B cell (primary cell): ENCODE measurements at regions of chr19 and their contacts with region 1.

Region 1: GRCh38 chr19:36772311-36773222 is at the start of gene ZNF850:
- DNase-seq: peak; percentile 98
- ATAC-seq: peak; percentile 92
- H3K4me3 ChIP-seq: peak within 1 kb of the TSS; percentile 66 to 99 (median 96)
- H3K4me3 Mint-ChIP-seq: peak within 1 kb of the TSS; percentile 98
- H3K27ac ChIP-seq: peak within 1 kb of the TSS; percentile 69 to 81
- H3K27ac Mint-ChIP-seq: peak within 1 kb of the TSS; percentile 94
- H3K4me1 ChIP-seq: peaks cover 15 to 21% of the 10 kb centered on the region in 2 donors
- H3K4me1 Mint-ChIP-seq: peaks cover 25% of the 10 kb centered on the region
- H3K27me3 ChIP-seq: no peaks in the 10 kb centered on the region
- H3K27me3 Mint-ChIP-seq: no peaks in the 10 kb centered on the region
- CTCF ChIP-seq: no peak
- total RNA-seq, gene ZNF850: 6.0 and 6.7 TPM in 2 replicates

Region 2: DNA sequence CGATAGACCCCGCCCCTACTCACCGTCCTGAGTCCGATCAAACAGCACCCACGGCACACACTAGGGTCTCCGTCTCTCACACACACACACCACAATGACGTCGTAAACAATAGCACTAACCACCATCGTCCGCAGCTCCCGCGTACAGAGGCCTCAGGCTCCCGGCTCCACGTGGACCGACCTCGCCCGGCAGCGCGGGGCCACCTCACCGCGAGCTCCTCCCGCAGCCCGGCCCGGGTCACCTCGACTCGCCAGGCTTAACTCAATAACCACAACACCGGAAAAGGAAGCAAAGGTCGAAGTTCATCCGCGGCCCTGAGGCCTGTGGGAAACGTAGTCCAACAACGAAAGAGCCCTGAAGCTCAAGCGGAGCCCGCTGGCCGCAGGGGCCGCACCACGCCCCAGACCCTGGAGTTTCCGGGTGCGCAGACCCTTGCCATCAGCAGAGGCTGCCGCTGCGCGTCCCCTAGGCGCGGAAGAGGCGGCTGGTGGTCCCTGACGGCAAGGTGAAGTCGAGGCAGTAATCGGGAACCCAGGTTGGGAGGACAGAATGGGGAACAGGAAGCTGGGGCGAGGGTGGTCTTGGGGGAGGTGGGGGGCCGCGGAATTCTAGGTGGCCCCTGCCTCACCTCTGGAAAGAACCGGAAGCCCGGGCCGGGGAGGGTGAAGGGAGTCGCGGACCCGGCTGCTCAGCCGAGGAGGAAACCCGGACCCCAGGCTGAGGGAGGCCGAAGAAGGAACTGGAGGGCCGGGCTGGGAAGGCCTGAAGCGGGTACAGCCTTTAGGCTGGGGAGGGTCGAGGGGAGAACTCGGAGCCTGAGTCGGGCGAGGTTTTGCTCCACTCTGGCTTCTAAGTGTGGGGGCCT is 199.3 kb before region 1 on chr19 and contains the start of gene ZNF529:
- CTCF ChIA-PET with region 1: no interaction called
- POLR2A ChIA-PET with region 1: no interaction called
- intact Hi-C with region 1: loop called (anchors 1 kb)
- DNase-seq: peak; percentile 93
- ATAC-seq: peak; percentile 94
- H3K4me3 ChIP-seq: peak within 1 kb of the TSS; percentile 57 to 91 (median 88)
- H3K4me3 Mint-ChIP-seq: peak within 1 kb of the TSS; percentile 92
- H3K27ac ChIP-seq: peak within 1 kb of the TSS; percentile 82 to 98
- H3K27ac Mint-ChIP-seq: peak within 1 kb of the TSS; percentile 91
- H3K4me1 ChIP-seq: peaks cover 18% of the 10 kb centered on the region in 2 donors
- H3K4me1 Mint-ChIP-seq: peaks cover 34% of the 10 kb centered on the region
- H3K27me3 ChIP-seq: no peaks in the 10 kb centered on the region
- H3K27me3 Mint-ChIP-seq: no peaks in the 10 kb centered on the region
- CTCF ChIP-seq: no peak
- total RNA-seq, gene ZNF529: 33.2 and 35.4 TPM in 2 replicates

Region 3: GRCh38 chr19:36745870-36746269 is 26.7 kb before region 1 on chr19:
- CTCF ChIA-PET with region 1: no interaction called
- POLR2A ChIA-PET with region 1: no interaction called
- intact Hi-C with region 1: no loop called
- DNase-seq: no peak
- ATAC-seq: no peak
- H3K4me3 ChIP-seq: no peak overlapping the region
- H3K4me3 Mint-ChIP-seq: no peak overlapping the region
- H3K27ac ChIP-seq: no peak overlapping the region
- H3K27ac Mint-ChIP-seq: no peak overlapping the region
- H3K4me1 ChIP-seq: no peaks in the 10 kb centered on the region
- H3K4me1 Mint-ChIP-seq: no peaks in the 10 kb centered on the region
- H3K27me3 ChIP-seq: no peaks in the 10 kb centered on the region
- H3K27me3 Mint-ChIP-seq: no peaks in the 10 kb centered on the region
- CTCF ChIP-seq: no peak

Region 4: GRCh38 chr19:36796076-36796992 is 23.8 kb after region 1 on chr19:
- CTCF ChIA-PET with region 1: no interaction called
- POLR2A ChIA-PET with region 1: interaction called, 3 read pairs
- intact Hi-C with region 1: loop called (anchors 1 kb)
- DNase-seq: no peak
- ATAC-seq: no peak
- H3K4me3 ChIP-seq: peak overlapping the region; percentile 63 to 91 (median 84)
- H3K4me3 Mint-ChIP-seq: peak overlapping the region; percentile 95
- H3K27ac ChIP-seq: peak overlapping the region; percentile 86 to 90
- H3K27ac Mint-ChIP-seq: peak overlapping the region; percentile 99
- H3K4me1 ChIP-seq: peaks cover 0 to 17% of the 10 kb centered on the region in 2 donors
- H3K4me1 Mint-ChIP-seq: peaks cover 25% of the 10 kb centered on the region
- H3K27me3 ChIP-seq: peaks cover 0 to 6% (median 0%) of the 10 kb centered on the region in 4 experiments
- H3K27me3 Mint-ChIP-seq: peaks cover 7% of the 10 kb centered on the region
- CTCF ChIP-seq: no peak

Region 5: DNA sequence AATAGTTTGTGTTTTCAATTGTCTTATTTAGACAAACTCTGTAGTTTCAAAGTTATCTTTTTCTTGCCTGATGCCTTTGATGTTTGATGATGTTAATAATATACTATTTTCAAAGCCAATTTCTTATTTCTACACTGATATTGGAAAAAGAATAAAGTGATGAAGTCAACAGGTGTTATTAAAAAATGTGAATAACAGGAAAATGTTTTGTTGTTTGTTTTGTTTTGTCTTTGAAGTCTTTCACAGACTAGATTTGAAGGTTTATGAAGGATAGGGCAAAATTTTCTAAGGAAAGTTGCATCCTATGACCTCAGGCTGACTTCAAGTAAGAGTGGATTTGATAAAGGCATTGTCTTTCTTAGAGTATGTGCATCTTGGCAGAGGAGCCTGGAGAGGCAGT is 34.5 kb after region 1 on chr19:
- CTCF ChIA-PET with region 1: no interaction called
- POLR2A ChIA-PET with region 1: no interaction called
- intact Hi-C with region 1: no loop called
- DNase-seq: no peak
- ATAC-seq: no peak
- H3K4me3 ChIP-seq: no peak overlapping the region
- H3K4me3 Mint-ChIP-seq: no peak overlapping the region
- H3K27ac ChIP-seq: no peak overlapping the region
- H3K27ac Mint-ChIP-seq: no peak overlapping the region
- H3K4me1 ChIP-seq: no peaks in the 10 kb centered on the region
- H3K4me1 Mint-ChIP-seq: no peaks in the 10 kb centered on the region
- H3K27me3 ChIP-seq: no peaks in the 10 kb centered on the region
- H3K27me3 Mint-ChIP-seq: no peaks in the 10 kb centered on the region
- CTCF ChIP-seq: no peak

Region 6: DNA sequence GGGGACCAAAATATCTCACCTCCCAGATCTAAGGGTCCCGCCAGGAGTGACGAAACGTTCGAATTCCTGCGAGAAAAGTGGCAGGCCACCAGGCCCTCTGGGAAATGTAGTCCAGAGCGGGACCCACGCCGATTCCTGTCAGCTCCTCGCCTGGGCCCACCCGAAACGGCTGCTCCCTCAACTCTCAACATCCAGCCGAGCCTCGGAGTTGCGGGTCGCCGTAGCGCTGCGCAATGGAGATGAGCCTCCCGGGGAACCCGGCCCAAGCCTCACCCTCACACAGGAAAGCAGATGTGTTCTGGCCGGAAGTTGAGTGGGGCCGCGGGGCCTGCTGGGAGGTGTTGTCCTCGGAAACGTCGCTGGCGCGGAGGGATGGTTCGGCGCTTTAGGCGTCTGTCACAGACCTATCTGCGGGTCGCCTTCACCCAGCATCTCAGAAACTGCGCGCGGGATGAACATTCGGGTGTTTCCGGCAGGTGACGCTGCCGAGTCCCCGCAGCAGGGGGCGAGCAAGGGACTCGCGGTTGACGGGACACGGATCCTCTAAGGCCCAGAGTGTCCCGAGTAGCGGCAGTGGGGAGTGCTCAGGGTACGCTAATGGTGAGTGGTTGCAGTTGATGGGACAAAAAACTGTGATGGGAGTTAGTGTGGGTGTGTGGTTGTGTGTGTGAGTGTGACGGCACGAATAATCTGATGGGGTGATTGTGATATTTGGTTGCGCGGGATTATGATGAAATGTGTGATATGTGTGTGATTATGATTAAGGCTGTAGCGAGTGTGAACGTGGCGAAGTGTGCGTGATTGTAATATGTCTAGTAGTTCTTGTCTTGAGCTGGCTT is 143.6 kb after region 1 on chr19 and contains the starts of genes ZNF568 and ZNF829:
- CTCF ChIA-PET with region 1: no interaction called
- POLR2A ChIA-PET with region 1: no interaction called
- intact Hi-C with region 1: loop called (anchors 1 kb)
- DNase-seq: peak; percentile 96
- ATAC-seq: peak; percentile 89
- H3K4me3 ChIP-seq: peak within 1 kb of the TSS; percentile 77 to 90 (median 86)
- H3K4me3 Mint-ChIP-seq: peak within 1 kb of the TSS; percentile 96
- H3K27ac ChIP-seq: peak within 1 kb of the TSS; percentile 86 to 95
- H3K27ac Mint-ChIP-seq: peak within 1 kb of the TSS; percentile 95
- H3K4me1 ChIP-seq: peaks cover 11 to 12% of the 10 kb centered on the region in 2 donors
- H3K4me1 Mint-ChIP-seq: peaks cover 24% of the 10 kb centered on the region
- H3K27me3 ChIP-seq: no peaks in the 10 kb centered on the region
- H3K27me3 Mint-ChIP-seq: no peaks in the 10 kb centered on the region
- CTCF ChIP-seq: peak; percentile 81
- total RNA-seq, gene ZNF568: 19.4 and 21.1 TPM in 2 replicates
- total RNA-seq, gene ZNF829: 8.4 and 9.6 TPM in 2 replicates

Region 7: GRCh38 chr19:37172368-37173366 is 400.1 kb after region 1 on chr19 and contains the start of gene ZNF585A:
- CTCF ChIA-PET with region 1: no interaction called
- POLR2A ChIA-PET with region 1: no interaction called
- intact Hi-C with region 1: loop called (anchors 2 kb)
- DNase-seq: peak; percentile 96
- ATAC-seq: peak; percentile 100
- H3K4me3 ChIP-seq: peak within 1 kb of the TSS; percentile 72 to 96 (median 82)
- H3K4me3 Mint-ChIP-seq: no peak within 1 kb of the TSS
- H3K27ac ChIP-seq: peak within 1 kb of the TSS; percentile 70 to 89
- H3K27ac Mint-ChIP-seq: no peak within 1 kb of the TSS
- H3K4me1 ChIP-seq: peaks cover 5 to 7% of the 10 kb centered on the region in 2 donors
- H3K4me1 Mint-ChIP-seq: peaks cover 3% of the 10 kb centered on the region
- H3K27me3 ChIP-seq: no peaks in the 10 kb centered on the region
- H3K27me3 Mint-ChIP-seq: no peaks in the 10 kb centered on the region
- CTCF ChIP-seq: peak; percentile 23
- total RNA-seq, gene ZNF585A: 20.0 and 22.0 TPM in 2 replicates

Region 8: GRCh38 chr19:37779127-37780005 is 1006.8 kb after region 1 on chr19 and contains the start of gene ZNF573:
- CTCF ChIA-PET with region 1: no interaction called
- POLR2A ChIA-PET with region 1: no interaction called
- intact Hi-C with region 1: loop called (anchors 10 kb)
- DNase-seq: peak; percentile 91
- ATAC-seq: peak; percentile 84
- H3K4me3 ChIP-seq: peak within 1 kb of the TSS; percentile 71 to 81 (median 74)
- H3K4me3 Mint-ChIP-seq: peak within 1 kb of the TSS; percentile 96
- H3K27ac ChIP-seq: peak within 1 kb of the TSS; percentile 86 to 93
- H3K27ac Mint-ChIP-seq: peak within 1 kb of the TSS; percentile 97
- H3K4me1 ChIP-seq: peaks cover 7 to 11% of the 10 kb centered on the region in 2 donors
- H3K4me1 Mint-ChIP-seq: peaks cover 39% of the 10 kb centered on the region
- H3K27me3 ChIP-seq: no peaks in the 10 kb centered on the region
- H3K27me3 Mint-ChIP-seq: no peaks in the 10 kb centered on the region
- CTCF ChIP-seq: peak; percentile 18
- total RNA-seq, gene ZNF573: 28.8 and 31.1 TPM in 2 replicates